Activated CD4-positive, alpha-beta memory T cell treated with anti-CD3 and anti-CD28 coated beads for 36 hours (primary cell): ENCODE measurements at regions of chr10 and their contacts with region 1.

Region 1: GRCh38 chr10:118241229-118242137 is 100.6 kb downstream of the FAM204A start:
- DNase-seq: peak; percentile 76
- H3K4me3 Mint-ChIP-seq: no peak overlapping the region
- H3K27ac Mint-ChIP-seq: no peak overlapping the region
- H3K4me1 Mint-ChIP-seq: no peaks in the 10 kb centered on the region
- H3K27me3 Mint-ChIP-seq: peaks cover 41% of the 10 kb centered on the region

Region 2: GRCh38 chr10:117496616-117497028 is 744.9 kb before region 1 on chr10:
- CTCF ChIA-PET with region 1: interaction called, 89 read pairs
- POLR2A ChIA-PET with region 1: no interaction called
- intact Hi-C with region 1: loop called (anchors 1 kb)
- DNase-seq: peak; percentile 79
- H3K4me3 Mint-ChIP-seq: no peak overlapping the region
- H3K27ac Mint-ChIP-seq: no peak overlapping the region
- H3K4me1 Mint-ChIP-seq: no peaks in the 10 kb centered on the region
- H3K27me3 Mint-ChIP-seq: peaks cover 21% of the 10 kb centered on the region

Region 3: DNA sequence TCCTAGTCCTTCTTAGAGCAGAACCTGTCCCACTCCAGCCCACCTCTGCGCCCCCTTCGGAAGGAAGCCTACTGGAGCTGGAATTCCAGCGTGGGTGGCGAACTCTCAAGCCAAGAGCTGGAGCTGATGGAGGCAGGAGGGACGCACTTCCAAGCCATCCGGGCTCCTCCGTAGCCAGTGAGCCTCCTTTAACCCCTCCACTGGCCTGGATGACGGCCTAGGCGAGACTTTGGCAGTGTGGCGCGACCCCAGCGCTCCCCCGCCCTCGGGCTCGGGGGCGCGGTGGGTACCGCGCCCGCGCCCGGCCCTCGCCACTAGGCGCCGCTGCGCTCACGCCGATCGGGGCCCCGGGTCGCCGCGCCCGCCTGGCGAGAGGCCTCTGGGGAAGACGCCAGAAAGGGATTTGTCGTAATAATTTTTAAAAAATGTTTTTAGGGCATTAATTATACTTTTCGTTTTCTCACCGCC is 704.0 kb before region 1 on chr10:
- CTCF ChIA-PET with region 1: interaction called, 12 read pairs
- POLR2A ChIA-PET with region 1: no interaction called
- intact Hi-C with region 1: loop called (anchors 1 kb)
- DNase-seq: peak; percentile 39
- H3K4me3 Mint-ChIP-seq: no peak overlapping the region
- H3K27ac Mint-ChIP-seq: no peak overlapping the region
- H3K4me1 Mint-ChIP-seq: peaks cover 18% of the 10 kb centered on the region
- H3K27me3 Mint-ChIP-seq: peaks cover 66% of the 10 kb centered on the region

Region 4: GRCh38 chr10:117597216-117597615 is 644.3 kb before region 1 on chr10:
- CTCF ChIA-PET with region 1: no interaction called
- POLR2A ChIA-PET with region 1: no interaction called
- intact Hi-C with region 1: no loop called
- DNase-seq: no peak
- H3K4me3 Mint-ChIP-seq: no peak overlapping the region
- H3K27ac Mint-ChIP-seq: no peak overlapping the region
- H3K4me1 Mint-ChIP-seq: no peaks in the 10 kb centered on the region
- H3K27me3 Mint-ChIP-seq: peaks cover 7% of the 10 kb centered on the region

Region 5: DNA sequence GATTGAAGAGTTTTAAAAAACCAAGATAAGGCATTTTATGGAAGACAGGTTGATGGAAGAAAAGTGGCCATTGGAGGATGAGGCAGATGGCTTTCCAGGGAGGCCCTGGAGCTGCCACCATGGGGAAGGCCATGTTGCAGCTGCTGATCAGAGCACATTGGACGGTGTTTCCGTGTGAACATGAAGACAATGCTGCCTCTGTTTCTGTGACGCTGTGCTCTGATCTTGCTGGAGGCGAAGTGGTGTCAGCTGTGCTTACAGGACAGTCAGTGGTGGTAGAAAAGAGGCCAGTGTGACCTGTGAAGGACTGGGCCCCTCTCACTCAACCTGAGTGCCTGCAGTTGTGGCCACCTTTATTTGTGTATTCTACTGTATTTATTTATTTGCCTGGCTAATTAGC is 32.3 kb before region 1 on chr10:
- CTCF ChIA-PET with region 1: no interaction called
- POLR2A ChIA-PET with region 1: no interaction called
- intact Hi-C with region 1: no loop called
- DNase-seq: no peak
- H3K4me3 Mint-ChIP-seq: no peak overlapping the region
- H3K27ac Mint-ChIP-seq: no peak overlapping the region
- H3K4me1 Mint-ChIP-seq: no peaks in the 10 kb centered on the region
- H3K27me3 Mint-ChIP-seq: peaks cover 19% of the 10 kb centered on the region

Region 6: GRCh38 chr10:118259288-118259906 is 17.9 kb after region 1 on chr10:
- CTCF ChIA-PET with region 1: interaction called, 10 read pairs
- POLR2A ChIA-PET with region 1: no interaction called
- intact Hi-C with region 1: no loop called
- DNase-seq: peak; percentile 57
- H3K4me3 Mint-ChIP-seq: no peak overlapping the region
- H3K27ac Mint-ChIP-seq: no peak overlapping the region
- H3K4me1 Mint-ChIP-seq: no peaks in the 10 kb centered on the region
- H3K27me3 Mint-ChIP-seq: peaks cover 35% of the 10 kb centered on the region